Endothelial cell of umbilical vein (primary cell): ENCODE measurements at regions of chrX and their contacts with region 1.

Region 1: GRCh38 chrX:87338510-87338909 is 179.1 kb upstream of the KLHL4 start:
- DNase-seq: peak; percentile 50
- H3K4me3 ChIP-seq: no peak overlapping the region
- H3K27ac ChIP-seq: no peak overlapping the region
- H3K4me1 ChIP-seq: no peaks in the 10 kb centered on the region
- H3K27me3 ChIP-seq: no peaks in the 10 kb centered on the region
- CTCF ChIP-seq: no peak
- POLR2A ChIP-seq: no peak

Region 2: GRCh38 chrX:87236830-87237440 is 101.6 kb before region 1 on chrX:
- CTCF ChIA-PET with region 1: no interaction called
- POLR2A ChIA-PET with region 1: no interaction called
- dilution Hi-C with region 1: no loop called
- intact Hi-C with region 1: no loop called
- DNase-seq: no peak
- H3K4me3 ChIP-seq: no peak overlapping the region
- H3K27ac ChIP-seq: no peak overlapping the region
- H3K4me1 ChIP-seq: no peaks in the 10 kb centered on the region
- H3K27me3 ChIP-seq: no peaks in the 10 kb centered on the region
- CTCF ChIP-seq: no peak
- POLR2A ChIP-seq: no peak

Region 3: DNA sequence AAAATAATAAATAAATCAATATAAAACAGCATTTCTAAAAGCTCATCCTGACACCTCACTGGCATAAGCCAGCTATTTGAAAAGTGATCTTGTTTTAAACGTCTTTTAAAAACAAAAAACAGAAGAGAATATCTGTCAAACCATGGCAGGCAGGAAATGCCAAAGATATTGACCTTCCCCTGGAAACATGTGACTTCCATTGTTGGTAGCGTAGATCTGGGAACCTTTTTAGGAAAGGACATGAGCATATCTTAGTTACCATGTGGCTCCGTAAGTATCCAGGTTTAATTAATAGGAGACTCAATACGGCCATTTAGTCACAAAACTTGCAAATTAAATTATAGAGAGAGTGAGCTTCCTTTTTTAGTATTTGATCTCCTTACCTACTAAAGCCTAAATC is 96.1 kb after region 1 on chrX:
- CTCF ChIA-PET with region 1: no interaction called
- POLR2A ChIA-PET with region 1: no interaction called
- dilution Hi-C with region 1: no loop called
- intact Hi-C with region 1: loop called (anchors 1 kb)
- DNase-seq: peak; percentile 79
- H3K4me3 ChIP-seq: no peak overlapping the region
- H3K27ac ChIP-seq: no peak overlapping the region
- H3K4me1 ChIP-seq: peaks cover 14% of the 10 kb centered on the region
- H3K27me3 ChIP-seq: no peaks in the 10 kb centered on the region
- CTCF ChIP-seq: no peak
- POLR2A ChIP-seq: no peak

Region 4: GRCh38 chrX:87489071-87489470 is 150.6 kb after region 1 on chrX:
- CTCF ChIA-PET with region 1: no interaction called
- POLR2A ChIA-PET with region 1: no interaction called
- dilution Hi-C with region 1: no loop called
- intact Hi-C with region 1: no loop called
- DNase-seq: peak; percentile 47
- H3K4me3 ChIP-seq: no peak overlapping the region
- H3K27ac ChIP-seq: no peak overlapping the region
- H3K4me1 ChIP-seq: no peaks in the 10 kb centered on the region
- H3K27me3 ChIP-seq: no peaks in the 10 kb centered on the region
- CTCF ChIP-seq: no peak
- POLR2A ChIP-seq: no peak

Region 5: DNA sequence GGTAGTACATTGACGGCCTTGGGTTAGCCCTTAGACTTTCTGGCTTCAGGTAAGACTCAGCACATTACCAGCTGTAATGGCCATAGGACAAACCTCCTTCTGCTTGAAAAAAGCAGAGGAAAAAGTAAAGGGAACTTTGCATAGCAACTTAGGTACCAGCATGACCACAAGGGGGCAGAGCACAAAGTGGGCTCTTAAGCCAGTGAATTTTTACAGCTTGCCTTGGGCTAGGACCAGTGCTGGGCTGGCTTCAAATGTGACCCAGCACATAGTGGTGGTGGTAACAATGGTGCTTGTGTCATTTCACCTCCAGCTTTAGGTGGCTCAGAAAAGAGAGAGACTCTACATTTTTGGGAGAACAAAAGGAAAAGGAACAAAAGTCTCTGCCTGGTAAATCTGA is 245.2 kb after region 1 on chrX:
- CTCF ChIA-PET with region 1: interaction called, 25 read pairs
- POLR2A ChIA-PET with region 1: no interaction called
- dilution Hi-C with region 1: no loop called
- intact Hi-C with region 1: loop called (anchors 1 kb)
- DNase-seq: peak; percentile 33
- H3K4me3 ChIP-seq: no peak overlapping the region
- H3K27ac ChIP-seq: no peak overlapping the region
- H3K4me1 ChIP-seq: no peaks in the 10 kb centered on the region
- H3K27me3 ChIP-seq: no peaks in the 10 kb centered on the region
- CTCF ChIP-seq: peak; percentile 42 to 47
- POLR2A ChIP-seq: no peak

Region 6: GRCh38 chrX:87636533-87636932 is 298.0 kb after region 1 on chrX:
- CTCF ChIA-PET with region 1: no interaction called
- POLR2A ChIA-PET with region 1: no interaction called
- dilution Hi-C with region 1: no loop called
- intact Hi-C with region 1: no loop called
- DNase-seq: no peak
- H3K4me3 ChIP-seq: no peak overlapping the region
- H3K27ac ChIP-seq: no peak overlapping the region
- H3K4me1 ChIP-seq: peaks cover 9% of the 10 kb centered on the region
- H3K27me3 ChIP-seq: no peaks in the 10 kb centered on the region
- CTCF ChIP-seq: no peak
- POLR2A ChIP-seq: no peak

Region 7: GRCh38 chrX:87664381-87664780 is 325.9 kb after region 1 on chrX:
- CTCF ChIA-PET with region 1: interaction called, 39 read pairs
- POLR2A ChIA-PET with region 1: no interaction called
- dilution Hi-C with region 1: no loop called
- intact Hi-C with region 1: loop called (anchors 1 kb)
- DNase-seq: peak; percentile 64
- H3K4me3 ChIP-seq: no peak overlapping the region
- H3K27ac ChIP-seq: no peak overlapping the region
- H3K4me1 ChIP-seq: peaks cover 6% of the 10 kb centered on the region
- H3K27me3 ChIP-seq: no peaks in the 10 kb centered on the region
- CTCF ChIP-seq: no peak
- POLR2A ChIP-seq: no peak

Region 8: DNA sequence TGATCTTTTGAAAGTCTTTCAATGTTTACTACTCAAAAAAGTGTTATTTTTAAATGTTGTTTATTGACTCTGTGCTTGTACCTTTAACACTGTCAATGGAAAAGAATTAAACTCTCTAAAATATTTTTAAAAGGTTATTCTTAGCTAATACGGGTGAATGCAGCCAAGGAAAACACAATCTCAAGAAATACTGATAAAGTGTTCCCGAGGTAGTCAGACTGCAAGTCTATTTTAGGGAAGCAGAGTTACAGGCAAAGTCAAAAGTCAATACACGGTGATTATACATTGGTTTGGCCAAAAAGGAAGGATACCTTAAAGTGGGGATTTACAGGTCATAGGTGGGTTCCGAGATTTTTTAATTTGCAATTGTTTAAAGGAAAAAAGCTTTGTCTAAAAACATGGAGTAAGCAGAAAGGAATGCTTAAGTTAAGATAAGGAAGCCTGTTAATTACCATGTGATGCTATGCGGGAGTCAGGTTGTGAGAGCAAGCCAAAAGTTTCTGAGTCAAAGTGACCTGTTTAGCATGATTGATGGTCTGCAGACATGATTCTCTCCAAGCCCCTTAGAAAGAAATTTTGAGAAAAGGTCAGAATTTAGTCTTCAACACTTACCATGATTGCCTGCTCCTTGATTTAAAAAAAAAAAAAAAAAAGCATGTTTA is 467.4 kb after region 1 on chrX:
- CTCF ChIA-PET with region 1: no interaction called
- POLR2A ChIA-PET with region 1: no interaction called
- dilution Hi-C with region 1: no loop called
- intact Hi-C with region 1: loop called (anchors 1 kb)
- DNase-seq: peak; percentile 46
- H3K4me3 ChIP-seq: no peak overlapping the region
- H3K27ac ChIP-seq: no peak overlapping the region
- H3K4me1 ChIP-seq: no peaks in the 10 kb centered on the region
- H3K27me3 ChIP-seq: no peaks in the 10 kb centered on the region
- CTCF ChIP-seq: no peak
- POLR2A ChIP-seq: no peak